Caco-2 (cell line): ENCODE measurements at regions of chr16 and their contacts with region 1.

Region 1: GRCh38 chr16:82456683-82457082 is 170.1 kb upstream of the CDH13 start:
- DNase-seq: peak; percentile 72 to 81
- H3K4me3 ChIP-seq: no peak overlapping the region
- H3K4me3 Mint-ChIP-seq: no peak overlapping the region
- H3K27ac Mint-ChIP-seq: no peak overlapping the region
- H3K4me1 ChIP-seq: no peaks in the 10 kb centered on the region
- H3K4me1 Mint-ChIP-seq: peaks cover 8% of the 10 kb centered on the region
- H3K27me3 ChIP-seq: no peaks in the 10 kb centered on the region; the same call in 1 of the 2 replicates
- H3K27me3 Mint-ChIP-seq: peaks cover 19% of the 10 kb centered on the region
- CTCF ChIP-seq: peak; percentile 83 to 94

Region 2: GRCh38 chr16:82263521-82264143 is 193.1 kb before region 1 on chr16:
- CTCF ChIA-PET with region 1: interaction called, 30 read pairs
- POLR2A ChIA-PET with region 1: no interaction called
- intact Hi-C with region 1: loop called (anchors 1 kb)
- DNase-seq: peak; percentile 61 to 73
- H3K4me3 ChIP-seq: no peak overlapping the region
- H3K4me3 Mint-ChIP-seq: no peak overlapping the region
- H3K27ac Mint-ChIP-seq: no peak overlapping the region
- H3K4me1 ChIP-seq: 0 out of 2 replicates have a peak, but pooled peaks cover 3% of the 10 kb centered on the region
- H3K4me1 Mint-ChIP-seq: peaks cover 4% of the 10 kb centered on the region
- H3K27me3 ChIP-seq: no peaks in the 10 kb centered on the region
- H3K27me3 Mint-ChIP-seq: peaks cover 22% of the 10 kb centered on the region
- CTCF ChIP-seq: peak; percentile 96

Region 3: GRCh38 chr16:82368041-82368440 is 88.6 kb before region 1 on chr16:
- CTCF ChIA-PET with region 1: interaction called, 27 read pairs
- POLR2A ChIA-PET with region 1: no interaction called
- intact Hi-C with region 1: loop called (anchors 1 kb)
- DNase-seq: peak; percentile 62
- H3K4me3 ChIP-seq: no peak overlapping the region
- H3K4me3 Mint-ChIP-seq: no peak overlapping the region
- H3K27ac Mint-ChIP-seq: no peak overlapping the region
- H3K4me1 ChIP-seq: no peaks in the 10 kb centered on the region
- H3K4me1 Mint-ChIP-seq: no peaks in the 10 kb centered on the region
- H3K27me3 ChIP-seq: no peaks in the 10 kb centered on the region; the same call in 1 of the 2 replicates
- H3K27me3 Mint-ChIP-seq: peaks cover 20% of the 10 kb centered on the region
- CTCF ChIP-seq: peak; percentile 46 to 63

Region 4: GRCh38 chr16:82425661-82426060 is 31.0 kb before region 1 on chr16:
- CTCF ChIA-PET with region 1: no interaction called
- POLR2A ChIA-PET with region 1: no interaction called
- intact Hi-C with region 1: no loop called
- DNase-seq: no peak
- H3K4me3 ChIP-seq: no peak overlapping the region
- H3K4me3 Mint-ChIP-seq: no peak overlapping the region
- H3K27ac Mint-ChIP-seq: no peak overlapping the region
- H3K4me1 ChIP-seq: no peaks in the 10 kb centered on the region
- H3K4me1 Mint-ChIP-seq: no peaks in the 10 kb centered on the region
- H3K27me3 ChIP-seq: no peaks in the 10 kb centered on the region; the same call in 1 of the 2 replicates
- H3K27me3 Mint-ChIP-seq: peaks cover 28% of the 10 kb centered on the region
- CTCF ChIP-seq: no peak

Region 5: GRCh38 chr16:82439671-82440293 is 16.9 kb before region 1 on chr16:
- CTCF ChIA-PET with region 1: interaction called, 19 read pairs
- POLR2A ChIA-PET with region 1: no interaction called
- intact Hi-C with region 1: loop called (anchors 1 kb)
- DNase-seq: peak in 1 of 2 experiments; percentile 47
- H3K4me3 ChIP-seq: no peak overlapping the region
- H3K4me3 Mint-ChIP-seq: no peak overlapping the region
- H3K27ac Mint-ChIP-seq: peak overlapping the region; percentile 24
- H3K4me1 ChIP-seq: peaks cover 17% of the 10 kb centered on the region
- H3K4me1 Mint-ChIP-seq: peaks cover 12% of the 10 kb centered on the region
- H3K27me3 ChIP-seq: no peaks in the 10 kb centered on the region; the same call in 1 of the 2 replicates
- H3K27me3 Mint-ChIP-seq: peaks cover 14% of the 10 kb centered on the region
- CTCF ChIP-seq: peak; percentile 15 to 54